Right ventricle myocardium superior (tissue), 1 donor: ENCODE measurements at regions of chr6 and their contacts with region 1.

Region 1: DNA sequence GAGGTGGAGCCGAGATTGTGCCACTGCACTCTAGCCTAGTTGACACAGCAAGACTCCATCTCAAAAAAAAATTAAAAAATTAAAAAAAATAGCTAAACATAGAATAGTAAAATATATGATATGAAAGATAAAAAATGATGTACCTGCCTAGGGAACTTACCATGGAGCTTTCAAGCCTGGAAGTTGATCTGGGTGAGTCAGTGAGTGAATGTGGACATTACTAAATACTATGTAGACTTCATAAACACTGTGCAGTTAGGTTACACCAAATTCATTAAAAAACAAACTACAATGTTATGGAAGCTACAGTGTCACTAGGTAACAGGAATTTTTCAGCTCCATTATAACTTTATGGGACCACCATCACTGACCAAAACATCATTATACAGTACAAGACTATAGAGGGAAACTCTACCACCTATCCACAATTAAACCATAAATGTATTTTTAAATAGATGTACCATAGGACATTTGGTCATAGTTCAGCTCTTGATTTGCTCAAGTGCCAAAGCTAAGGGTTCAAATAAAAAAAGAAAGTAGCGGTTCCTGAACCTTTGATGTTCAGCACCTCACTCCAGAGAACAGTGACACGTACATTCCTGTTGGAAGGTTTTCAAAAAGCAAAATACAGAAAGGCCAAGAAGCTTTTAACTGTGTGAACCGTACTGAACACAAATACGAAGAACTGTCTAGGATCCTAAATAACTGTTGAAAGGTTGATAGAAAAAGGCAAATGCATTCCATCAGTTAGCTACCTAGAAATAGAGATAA is 52.4 kb upstream of the SPDEF start:
- DNase-seq: no peak
- ATAC-seq: no peak

Region 2: GRCh38 chr6:34055223-34055933 is 553.1 kb before region 1 on chr6:
- intact Hi-C with region 1: no loop called
- DNase-seq: peak; percentile 70
- ATAC-seq: peak; percentile 72

Region 3: GRCh38 chr6:34459899-34460593 is 148.5 kb before region 1 on chr6:
- intact Hi-C with region 1: loop called (anchors 5 kb)
- DNase-seq: no peak
- ATAC-seq: peak; percentile 70

Region 4: DNA sequence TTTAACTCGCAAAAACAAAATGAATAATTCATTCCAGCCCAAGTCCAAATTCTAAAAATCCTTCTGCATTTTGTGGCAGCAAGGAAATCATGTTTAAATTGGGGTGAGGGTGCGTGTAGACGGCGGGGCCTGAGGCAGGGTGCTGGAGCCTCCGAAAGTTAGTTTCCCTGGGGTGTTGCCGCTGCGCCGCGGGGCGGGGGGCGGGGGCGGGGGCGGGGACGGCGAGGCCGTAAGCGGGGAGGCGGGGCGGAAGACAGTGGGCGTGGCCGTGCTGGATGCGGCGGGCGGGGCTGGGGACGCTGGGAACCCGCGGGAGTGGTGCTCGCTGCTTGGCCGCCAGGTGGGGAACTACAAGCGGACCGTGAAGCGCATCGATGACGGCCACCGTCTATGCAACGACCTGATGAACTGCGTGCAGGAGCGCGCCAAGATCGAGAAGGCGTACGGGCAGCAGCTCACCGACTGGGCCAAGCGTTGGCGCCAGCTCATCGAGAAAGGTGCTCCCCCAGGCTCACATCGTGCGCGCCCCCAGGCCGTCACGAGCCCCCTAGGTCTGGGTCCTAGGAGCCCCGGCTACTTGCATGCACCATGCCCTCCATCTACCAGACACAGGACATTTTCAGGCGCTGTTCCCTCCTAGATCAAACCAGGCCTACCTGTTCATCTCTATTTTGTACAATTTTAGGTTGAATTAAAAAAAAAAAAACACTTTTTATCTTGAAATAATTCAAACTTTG is 81.3 kb before region 1 on chr6:
- intact Hi-C with region 1: loop called (anchors 2 kb)
- DNase-seq: peak; percentile 98
- ATAC-seq: peak; percentile 98